A673 (cell line): ENCODE measurements at regions of chr14 and their contacts with region 1.

Region 1: GRCh38 chr14:99026471-99026870 is 245.5 kb downstream of the BCL11B start:
- DNase-seq: peak; percentile 50
- H3K4me3 ChIP-seq: no peak overlapping the region
- H3K27ac ChIP-seq: no peak overlapping the region
- H3K4me1 ChIP-seq: no peaks in the 10 kb centered on the region
- H3K27me3 ChIP-seq: no peaks in the 10 kb centered on the region
- CTCF ChIP-seq: no peak

Region 2: DNA sequence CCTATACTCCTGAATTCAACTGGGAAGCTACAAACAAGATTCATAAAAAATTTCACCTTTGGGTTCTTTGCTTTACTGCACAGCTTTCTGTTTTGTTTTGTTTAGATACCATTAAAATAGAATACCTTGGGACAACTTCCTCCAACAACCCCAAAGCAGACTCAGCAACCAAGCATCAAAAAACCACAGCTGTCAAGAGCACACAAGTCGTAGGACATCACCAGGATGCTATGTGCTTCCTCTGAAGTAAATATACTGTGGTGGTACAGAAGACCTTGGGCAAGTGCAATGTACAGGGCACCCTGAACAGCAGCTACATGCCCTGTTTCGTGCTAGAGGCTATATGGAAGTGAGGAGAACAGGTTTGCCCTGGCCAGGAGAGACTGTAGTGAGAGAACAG is 113.8 kb before region 1 on chr14:
- CTCF ChIA-PET with region 1: no interaction called
- POLR2A ChIA-PET with region 1: no interaction called
- intact Hi-C with region 1: loop called (anchors 5 kb)
- DNase-seq: no peak
- H3K4me3 ChIP-seq: no peak overlapping the region
- H3K27ac ChIP-seq: no peak overlapping the region
- H3K4me1 ChIP-seq: no peaks in the 10 kb centered on the region
- H3K27me3 ChIP-seq: no peaks in the 10 kb centered on the region
- CTCF ChIP-seq: no peak

Region 3: DNA sequence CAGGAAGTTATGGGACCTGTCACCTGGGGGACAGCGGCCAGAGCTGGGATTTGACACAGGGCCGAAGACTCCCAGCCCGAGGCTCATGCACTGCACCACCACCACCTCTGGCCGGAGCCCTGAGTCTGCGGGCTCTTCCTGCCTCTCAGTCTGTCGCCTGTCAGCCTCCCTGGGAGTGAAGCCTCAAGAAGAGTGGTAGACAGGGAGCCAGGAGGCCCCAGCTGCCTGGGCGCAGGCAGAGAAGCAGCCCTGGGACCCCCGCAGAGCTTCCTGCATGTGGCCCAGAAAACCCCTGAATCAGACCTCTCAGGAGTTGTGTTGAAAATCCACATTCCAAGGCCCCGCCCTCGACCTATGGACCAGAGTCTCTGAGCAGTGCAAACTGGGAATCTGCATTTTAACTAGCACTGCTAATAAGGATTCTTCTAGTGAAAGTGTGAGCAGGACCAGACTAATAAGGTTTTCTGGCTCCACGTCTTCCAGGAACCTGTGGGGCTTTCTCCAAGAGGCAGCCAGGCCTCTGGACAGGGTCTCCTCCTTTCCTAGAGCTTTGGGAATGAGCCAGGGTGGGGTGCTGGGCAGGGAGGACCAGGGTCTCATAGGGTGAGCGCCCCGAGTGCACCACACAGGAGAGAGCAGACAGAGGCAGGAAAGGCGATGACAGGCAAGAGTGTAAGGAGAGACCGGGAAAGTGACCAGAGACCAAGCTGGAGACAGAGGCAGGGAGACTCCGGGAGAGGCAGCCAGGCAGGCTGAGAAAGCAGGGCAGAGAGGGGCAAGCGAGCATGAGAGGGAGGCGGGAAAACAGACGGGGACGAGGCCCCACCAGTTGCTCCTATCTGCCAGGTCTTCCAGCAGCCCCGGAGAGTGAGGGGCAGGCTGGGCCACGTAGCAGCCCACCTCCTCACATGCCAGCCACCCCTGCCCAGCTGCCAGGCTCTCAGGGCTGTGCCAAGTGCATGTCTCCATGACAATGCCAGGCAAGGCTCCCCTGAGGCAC is 133.2 kb after region 1 on chr14:
- CTCF ChIA-PET with region 1: no interaction called
- POLR2A ChIA-PET with region 1: no interaction called
- intact Hi-C with region 1: no loop called
- DNase-seq: no peak
- H3K4me3 ChIP-seq: no peak overlapping the region
- H3K27ac ChIP-seq: no peak overlapping the region
- H3K4me1 ChIP-seq: peaks cover 15% of the 10 kb centered on the region
- H3K27me3 ChIP-seq: no peaks in the 10 kb centered on the region
- CTCF ChIP-seq: no peak